ENCODE measurements at regions of chr17 and their contacts with region 1.

Region 1: DNA sequence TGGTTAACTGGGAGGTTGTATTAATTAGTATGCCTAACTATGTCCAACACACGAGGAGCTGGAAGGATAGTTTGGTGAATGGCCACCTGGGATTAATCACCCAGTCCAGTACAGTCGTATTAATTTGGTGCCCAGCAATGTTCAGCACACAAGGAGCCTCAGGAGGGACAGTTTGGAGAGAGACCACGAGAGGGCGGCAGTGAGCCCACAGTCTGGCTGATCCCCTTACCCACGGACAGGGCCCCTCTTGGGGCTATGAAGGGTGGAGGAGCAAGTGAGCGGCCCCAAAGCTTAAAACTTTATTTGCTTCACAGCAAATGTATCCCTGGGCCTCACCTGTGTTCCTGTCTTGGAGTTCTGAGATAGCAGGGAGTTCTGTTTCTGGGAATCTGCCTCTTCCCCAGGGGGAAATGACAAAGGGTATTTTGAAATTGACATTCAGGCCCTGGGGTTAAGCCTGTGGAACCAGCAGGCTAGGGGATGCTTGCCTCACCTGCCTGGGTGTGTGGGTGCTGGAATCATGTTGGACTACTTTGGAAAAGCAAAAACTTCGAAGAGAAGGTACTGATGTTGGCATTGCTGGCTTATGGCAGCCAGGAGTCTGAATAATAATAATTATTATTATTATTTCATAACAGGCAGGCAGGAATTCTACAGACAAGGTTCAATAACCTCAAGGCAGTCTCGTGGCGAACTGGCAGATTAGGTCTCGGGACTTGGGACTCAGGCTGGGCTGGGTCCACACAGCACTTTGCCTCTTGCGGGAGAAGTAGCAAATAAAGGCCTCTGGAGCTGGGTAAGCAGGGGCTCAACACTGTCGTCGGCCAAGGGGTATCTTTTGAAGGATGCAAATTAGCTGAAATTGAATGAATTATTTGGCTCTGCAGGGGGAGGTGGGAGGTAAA is 227.6 kb upstream of the ASIC2 start:
- DNase-seq: peak; percentile 19
- H3K4me3 ChIP-seq: no peak overlapping the region
- H3K27ac ChIP-seq: no peak overlapping the region
- H3K4me1 ChIP-seq: no peaks in the 10 kb centered on the region
- H3K27me3 ChIP-seq: no peaks in the 10 kb centered on the region
- CTCF ChIP-seq: peak; percentile 52 to 73
- POLR2A ChIP-seq: no peak

Region 2: DNA sequence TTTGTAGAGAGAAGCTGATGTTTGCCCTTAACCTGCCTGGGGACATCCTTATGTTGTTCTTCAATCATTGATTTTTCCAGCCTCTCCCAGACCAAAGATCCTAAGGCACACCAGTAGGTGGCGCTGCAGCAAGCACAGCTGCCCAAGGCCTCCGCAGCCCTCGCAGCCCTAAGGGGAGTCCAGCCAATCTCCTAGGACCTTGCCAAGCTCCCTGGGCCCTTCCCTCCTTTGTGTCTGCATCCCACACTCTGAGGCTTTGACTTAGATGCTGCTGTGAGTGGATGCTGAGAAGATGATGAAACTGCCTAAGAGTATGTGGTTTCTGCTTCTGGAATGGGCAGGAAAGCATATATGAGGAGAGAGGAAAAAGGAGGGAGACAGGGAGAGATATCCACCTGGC is 481.9 kb before region 1 on chr17:
- CTCF ChIA-PET with region 1: no interaction called
- POLR2A ChIA-PET with region 1: no interaction called
- dilution Hi-C with region 1: no loop called
- intact Hi-C with region 1: loop called (anchors 5 kb)
- DNase-seq: peak; percentile 21
- H3K4me3 ChIP-seq: no peak overlapping the region
- H3K27ac ChIP-seq: no peak overlapping the region
- H3K4me1 ChIP-seq: no peaks in the 10 kb centered on the region
- H3K27me3 ChIP-seq: no peaks in the 10 kb centered on the region
- CTCF ChIP-seq: peak; percentile 53 to 60
- POLR2A ChIP-seq: no peak

Region 3: DNA sequence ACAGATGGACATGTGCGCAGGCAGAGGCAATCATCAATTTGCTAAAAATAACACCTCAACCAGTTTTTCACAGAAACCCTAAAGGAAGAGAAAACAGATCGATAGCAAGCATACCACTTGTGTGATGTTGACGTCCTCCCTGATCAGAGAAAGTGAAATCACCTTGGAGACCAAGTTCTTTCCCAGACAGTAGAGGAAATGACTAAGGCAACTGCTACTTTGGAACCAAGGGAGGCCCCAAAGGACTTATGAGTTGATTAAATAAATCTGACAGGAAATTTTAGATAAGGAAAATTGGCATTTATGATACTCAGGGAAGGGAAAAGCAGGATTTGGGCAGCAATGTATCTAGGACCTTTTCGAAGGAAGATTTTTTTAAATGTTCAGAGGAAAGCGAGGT is 39.5 kb after region 1 on chr17:
- CTCF ChIA-PET with region 1: no interaction called
- POLR2A ChIA-PET with region 1: no interaction called
- dilution Hi-C with region 1: no loop called
- intact Hi-C with region 1: loop called (anchors 2 kb)
- DNase-seq: peak; percentile 38
- H3K4me3 ChIP-seq: no peak overlapping the region
- H3K27ac ChIP-seq: no peak overlapping the region
- H3K4me1 ChIP-seq: no peaks in the 10 kb centered on the region
- H3K27me3 ChIP-seq: no peaks in the 10 kb centered on the region
- CTCF ChIP-seq: no peak
- POLR2A ChIP-seq: no peak

Region 4: GRCh38 chr17:33647956-33648355 is 127.3 kb after region 1 on chr17:
- CTCF ChIA-PET with region 1: no interaction called
- POLR2A ChIA-PET with region 1: no interaction called
- dilution Hi-C with region 1: no loop called
- intact Hi-C with region 1: loop called (anchors 2 kb)
- DNase-seq: no peak
- H3K4me3 ChIP-seq: no peak overlapping the region
- H3K27ac ChIP-seq: no peak overlapping the region
- H3K4me1 ChIP-seq: no peaks in the 10 kb centered on the region
- H3K27me3 ChIP-seq: no peaks in the 10 kb centered on the region
- CTCF ChIP-seq: no peak
- POLR2A ChIP-seq: no peak

Region 5: DNA sequence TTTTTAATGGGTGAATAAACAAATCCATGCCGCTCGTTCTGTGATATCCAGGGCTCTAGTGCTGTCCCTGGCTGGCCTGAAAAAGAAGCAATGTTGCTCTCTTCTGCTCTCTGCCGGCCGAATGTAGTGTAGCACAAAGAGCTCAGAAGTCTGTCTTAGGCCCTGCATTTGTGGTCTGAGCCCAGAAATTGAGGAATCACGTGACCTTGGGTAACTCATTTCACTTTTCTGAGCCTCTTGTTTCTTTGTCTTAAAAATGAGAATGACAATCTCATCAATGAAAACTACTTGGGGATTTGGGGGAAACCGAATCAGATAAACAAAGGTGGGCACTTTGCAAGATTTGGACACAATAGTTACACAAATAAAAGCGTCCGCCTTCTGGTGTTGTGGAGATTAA is 154.0 kb after region 1 on chr17:
- CTCF ChIA-PET with region 1: no interaction called
- POLR2A ChIA-PET with region 1: no interaction called
- dilution Hi-C with region 1: no loop called
- intact Hi-C with region 1: loop called (anchors 2 kb)
- DNase-seq: peak; percentile 67
- H3K4me3 ChIP-seq: no peak overlapping the region
- H3K27ac ChIP-seq: no peak overlapping the region
- H3K4me1 ChIP-seq: no peaks in the 10 kb centered on the region
- H3K27me3 ChIP-seq: no peaks in the 10 kb centered on the region
- CTCF ChIP-seq: peak; percentile 60 to 78
- POLR2A ChIP-seq: no peak

Region 6: GRCh38 chr17:33750943-33751701 is 230.4 kb after region 1 on chr17:
- CTCF ChIA-PET with region 1: no interaction called
- POLR2A ChIA-PET with region 1: no interaction called
- dilution Hi-C with region 1: no loop called
- intact Hi-C with region 1: loop called (anchors 1 kb)
- DNase-seq: peak; percentile 64
- H3K4me3 ChIP-seq: peak overlapping the region in 1 of 3 experiments; percentile 7
- H3K27ac ChIP-seq: no peak overlapping the region
- H3K4me1 ChIP-seq: no peaks in the 10 kb centered on the region
- H3K27me3 ChIP-seq: no peaks in the 10 kb centered on the region
- CTCF ChIP-seq: peak; percentile 70 to 79
- POLR2A ChIP-seq: no peak